ENCODE measurements at regions of chr5 and their contacts with region 1.

Region 1: DNA sequence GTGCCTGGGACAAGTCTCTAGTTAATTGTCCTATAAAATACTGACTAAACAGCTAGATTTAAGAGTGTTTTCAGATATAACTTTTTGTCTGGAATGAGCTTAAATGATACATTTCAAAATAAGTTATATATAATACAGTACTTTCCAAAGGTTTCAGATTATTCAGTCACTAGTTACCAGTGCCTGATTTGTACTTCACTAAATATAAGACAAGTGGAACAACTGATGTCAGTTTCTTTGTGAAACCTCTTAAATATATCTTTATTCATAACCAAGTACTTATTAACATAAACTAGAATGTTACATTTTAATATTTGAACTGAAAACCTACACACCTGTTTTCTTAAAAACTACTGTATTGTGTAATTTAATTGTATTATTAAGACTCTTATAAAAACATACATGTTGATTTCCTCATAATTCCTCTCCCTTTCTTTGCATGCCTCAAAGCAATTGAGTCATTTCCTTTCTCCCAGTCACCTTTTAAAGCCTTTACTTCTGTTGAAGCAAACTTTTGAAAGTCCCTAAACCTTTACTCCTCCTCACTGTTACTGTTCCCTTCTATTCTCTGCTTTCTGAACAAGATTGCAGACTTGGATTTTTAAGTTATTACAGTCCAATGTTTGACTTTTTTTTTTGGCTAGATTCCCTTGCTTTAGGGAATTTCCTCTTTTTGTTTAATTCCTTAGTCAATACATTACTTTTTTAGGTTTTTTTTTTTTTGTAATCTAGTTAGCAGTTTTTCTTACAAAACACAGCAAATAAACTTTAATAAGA is 8.7 kb upstream of the SEMA6A start:
- DNase-seq: no peak
- H3K4me3 ChIP-seq: no peak overlapping the region
- H3K27ac ChIP-seq: no peak overlapping the region
- H3K4me1 ChIP-seq: no peaks in the 10 kb centered on the region
- H3K27me3 ChIP-seq: no peaks in the 10 kb centered on the region
- CTCF ChIP-seq: no peak
- EP300 ChIP-seq: no peak
- POLR2A ChIP-seq: no peak

Region 2: DNA sequence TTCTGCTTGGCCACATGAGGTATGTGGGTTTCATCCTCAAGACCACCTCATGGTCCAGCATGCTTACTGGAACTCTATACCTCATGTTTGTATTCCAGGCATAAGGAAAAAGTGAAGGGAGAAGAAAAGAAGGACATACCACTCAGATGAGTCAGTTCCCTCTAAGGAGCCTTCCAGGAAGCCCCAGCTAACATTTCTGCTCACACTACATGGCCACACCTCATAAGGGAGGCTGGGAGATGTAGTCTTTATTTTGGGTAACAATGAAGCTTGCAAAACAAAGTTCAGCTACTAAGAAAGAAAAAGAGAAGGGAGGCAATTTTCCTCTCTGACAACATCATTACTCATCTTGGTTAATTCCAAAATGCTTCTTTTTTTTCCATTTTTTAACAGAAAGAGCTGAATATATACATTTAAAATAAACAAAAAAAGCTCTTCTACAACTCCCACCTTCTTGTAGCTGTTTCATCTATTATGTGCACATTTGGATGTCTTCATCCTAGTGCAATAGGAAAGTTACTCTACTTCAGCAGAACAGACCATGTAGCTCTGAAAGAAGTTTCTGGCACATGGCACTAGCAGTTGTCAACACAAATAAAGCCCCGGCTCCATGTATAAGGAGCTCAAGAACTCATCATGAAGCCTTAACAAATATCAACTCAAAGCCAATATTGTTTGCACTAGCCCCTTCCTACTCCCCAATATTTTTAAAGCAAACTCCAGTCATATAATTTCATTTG is 1163.3 kb before region 1 on chr5:
- in situ Hi-C with region 1: no loop called
- intact Hi-C with region 1: no loop called
- DNase-seq: no peak
- H3K4me3 ChIP-seq: no peak overlapping the region
- H3K27ac ChIP-seq: peak overlapping the region; percentile 10 to 87 (median 70)
- H3K4me1 ChIP-seq: peaks cover 28 to 76% (median 42%) of the 10 kb centered on the region in 4 donors
- H3K27me3 ChIP-seq: no peaks in the 10 kb centered on the region
- CTCF ChIP-seq: no peak
- EP300 ChIP-seq: no peak
- POLR2A ChIP-seq: no peak

Region 3: GRCh38 chr5:116922532-116922931 is 339.3 kb after region 1 on chr5:
- in situ Hi-C with region 1: loop called in 2 of 4 experiments (anchors 25 kb)
- intact Hi-C with region 1: loop called (anchors 5 kb)
- DNase-seq: no peak
- H3K4me3 ChIP-seq: no peak overlapping the region
- H3K27ac ChIP-seq: no peak overlapping the region
- H3K4me1 ChIP-seq: no peaks in the 10 kb centered on the region
- H3K27me3 ChIP-seq: no peaks in the 10 kb centered on the region
- CTCF ChIP-seq: no peak
- EP300 ChIP-seq: no peak
- POLR2A ChIP-seq: no peak

Region 4: GRCh38 chr5:116947691-116948528 is 364.6 kb after region 1 on chr5:
- in situ Hi-C with region 1: loop called in 3 of 4 experiments (anchors 10 to 25 kb)
- intact Hi-C with region 1: no loop called
- DNase-seq: peak; percentile 77
- H3K4me3 ChIP-seq: no peak overlapping the region
- H3K27ac ChIP-seq: no peak overlapping the region
- H3K4me1 ChIP-seq: no peaks in the 10 kb centered on the region
- H3K27me3 ChIP-seq: no peaks in the 10 kb centered on the region
- CTCF ChIP-seq: peak; percentile 63 to 69 (median 68)
- EP300 ChIP-seq: no peak
- POLR2A ChIP-seq: no peak

Region 5: GRCh38 chr5:117188211-117188610 is 604.9 kb after region 1 on chr5:
- in situ Hi-C with region 1: no loop called
- intact Hi-C with region 1: no loop called
- DNase-seq: no peak
- H3K4me3 ChIP-seq: no peak overlapping the region
- H3K27ac ChIP-seq: no peak overlapping the region
- H3K4me1 ChIP-seq: no peaks in the 10 kb centered on the region
- H3K27me3 ChIP-seq: no peaks in the 10 kb centered on the region
- CTCF ChIP-seq: no peak
- EP300 ChIP-seq: no peak
- POLR2A ChIP-seq: no peak